Caco-2 (cell line): ENCODE measurements at regions of chr3 and their contacts with region 1.

Region 1: DNA sequence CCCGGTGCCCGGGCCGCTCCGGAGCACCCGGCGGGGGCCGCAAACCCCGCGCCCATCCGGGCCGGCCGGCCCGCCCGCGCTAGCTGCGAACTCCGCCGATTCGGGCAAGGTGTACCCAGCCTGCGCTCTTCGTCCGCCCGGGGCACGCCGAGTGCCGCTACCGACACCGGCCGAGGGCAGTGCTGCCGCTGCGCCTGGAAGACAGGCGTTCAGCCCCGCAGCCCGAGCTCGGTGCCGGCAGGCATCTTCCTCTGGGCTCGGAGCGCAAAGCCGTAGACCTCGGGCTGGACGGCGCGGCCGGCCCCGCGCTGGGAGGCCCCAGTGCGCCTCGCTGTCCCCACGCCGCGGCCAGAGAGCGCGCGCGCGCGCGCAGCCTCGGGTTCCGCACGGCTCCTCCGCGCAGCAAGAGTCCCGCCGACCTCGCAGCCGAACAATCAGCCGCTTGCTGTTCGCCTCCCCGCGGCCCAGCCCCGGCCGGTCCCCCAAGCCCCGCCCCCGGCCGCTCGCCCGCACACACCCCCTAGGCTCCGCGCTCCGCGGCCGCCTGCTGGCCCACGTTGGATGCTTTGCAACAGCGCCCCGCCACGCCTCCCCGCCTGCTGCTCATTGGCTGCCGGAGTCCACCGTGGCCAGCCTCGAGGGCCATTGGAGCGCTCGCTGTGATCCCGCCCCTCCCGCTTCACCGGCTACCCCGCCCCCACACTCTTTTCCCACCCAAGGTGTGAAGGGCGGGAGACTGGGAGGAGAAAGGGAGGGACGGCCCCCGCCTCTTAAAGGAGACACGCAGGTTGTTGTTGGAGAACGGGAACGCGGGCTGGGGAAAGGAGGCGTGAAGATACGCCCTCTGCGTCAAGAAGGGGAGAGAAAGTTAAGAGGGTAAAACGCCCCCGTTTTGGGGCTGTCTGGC is at the start of gene LRIG1:
- DNase-seq: peak; percentile 99
- H3K4me3 ChIP-seq: peak within 1 kb of the TSS; percentile 98
- H3K4me3 Mint-ChIP-seq: peak within 1 kb of the TSS; percentile 91
- H3K27ac Mint-ChIP-seq: peak within 1 kb of the TSS; percentile 79
- H3K4me1 ChIP-seq: peaks cover 41% of the 10 kb centered on the region
- H3K4me1 Mint-ChIP-seq: peaks cover 31% of the 10 kb centered on the region
- H3K27me3 ChIP-seq: no peaks in the 10 kb centered on the region
- H3K27me3 Mint-ChIP-seq: no peaks in the 10 kb centered on the region
- CTCF ChIP-seq: peak in 1 of 2 experiments; percentile 34
- total RNA-seq, gene LRIG1: 43.4 and 47.0 TPM in 2 replicates

Region 2: GRCh38 chr3:66407611-66408218 is 93.1 kb before region 1 on chr3:
- CTCF ChIA-PET with region 1: no interaction called
- POLR2A ChIA-PET with region 1: no interaction called
- intact Hi-C with region 1: loop called (anchors 2 kb)
- DNase-seq: peak; percentile 72 to 84
- H3K4me3 ChIP-seq: no peak overlapping the region
- H3K4me3 Mint-ChIP-seq: no peak overlapping the region
- H3K27ac Mint-ChIP-seq: peak overlapping the region; percentile 53
- H3K4me1 ChIP-seq: peaks cover 4% of the 10 kb centered on the region; the same call in 1 of the 2 replicates
- H3K4me1 Mint-ChIP-seq: peaks cover 14% of the 10 kb centered on the region
- H3K27me3 ChIP-seq: no peaks in the 10 kb centered on the region
- H3K27me3 Mint-ChIP-seq: no peaks in the 10 kb centered on the region
- CTCF ChIP-seq: peak; percentile 76 to 91

Region 3: GRCh38 chr3:66464512-66464894 is 36.3 kb before region 1 on chr3:
- CTCF ChIA-PET with region 1: no interaction called
- POLR2A ChIA-PET with region 1: interaction called, 3 read pairs
- intact Hi-C with region 1: loop called (anchors 1 kb)
- DNase-seq: no peak
- H3K4me3 ChIP-seq: no peak overlapping the region
- H3K4me3 Mint-ChIP-seq: no peak overlapping the region
- H3K27ac Mint-ChIP-seq: peak overlapping the region; percentile 19
- H3K4me1 ChIP-seq: peaks cover 34% of the 10 kb centered on the region
- H3K4me1 Mint-ChIP-seq: peaks cover 23% of the 10 kb centered on the region
- H3K27me3 ChIP-seq: no peaks in the 10 kb centered on the region
- H3K27me3 Mint-ChIP-seq: no peaks in the 10 kb centered on the region
- CTCF ChIP-seq: no peak

Region 4: DNA sequence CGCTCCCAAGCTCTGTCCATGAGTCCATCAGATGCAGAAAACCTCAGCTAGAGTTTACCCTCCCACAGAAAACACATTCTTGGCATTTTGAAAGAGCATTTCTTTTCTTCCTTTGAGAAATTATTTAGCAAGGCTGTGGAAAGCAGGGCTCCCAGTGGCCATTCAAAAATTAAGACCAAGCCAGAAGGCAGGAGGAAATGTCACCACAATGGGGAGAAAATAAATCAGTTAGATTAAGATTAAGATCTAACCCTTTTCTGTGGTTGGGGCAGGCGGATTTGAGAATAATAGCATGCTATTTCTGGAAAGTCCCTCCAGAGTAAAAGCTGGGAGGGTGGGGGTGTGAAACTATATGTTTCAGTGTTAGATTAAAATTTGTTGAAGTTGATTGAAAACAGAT is 20.2 kb before region 1 on chr3:
- CTCF ChIA-PET with region 1: no interaction called
- POLR2A ChIA-PET with region 1: interaction called, 3 read pairs
- intact Hi-C with region 1: loop called (anchors 1 kb)
- DNase-seq: no peak
- H3K4me3 ChIP-seq: no peak overlapping the region
- H3K4me3 Mint-ChIP-seq: peak overlapping the region; percentile 58
- H3K27ac Mint-ChIP-seq: peak overlapping the region; percentile 85
- H3K4me1 ChIP-seq: peaks cover 95% of the 10 kb centered on the region
- H3K4me1 Mint-ChIP-seq: peaks cover 60% of the 10 kb centered on the region
- H3K27me3 ChIP-seq: no peaks in the 10 kb centered on the region
- H3K27me3 Mint-ChIP-seq: no peaks in the 10 kb centered on the region
- CTCF ChIP-seq: no peak

Region 5: DNA sequence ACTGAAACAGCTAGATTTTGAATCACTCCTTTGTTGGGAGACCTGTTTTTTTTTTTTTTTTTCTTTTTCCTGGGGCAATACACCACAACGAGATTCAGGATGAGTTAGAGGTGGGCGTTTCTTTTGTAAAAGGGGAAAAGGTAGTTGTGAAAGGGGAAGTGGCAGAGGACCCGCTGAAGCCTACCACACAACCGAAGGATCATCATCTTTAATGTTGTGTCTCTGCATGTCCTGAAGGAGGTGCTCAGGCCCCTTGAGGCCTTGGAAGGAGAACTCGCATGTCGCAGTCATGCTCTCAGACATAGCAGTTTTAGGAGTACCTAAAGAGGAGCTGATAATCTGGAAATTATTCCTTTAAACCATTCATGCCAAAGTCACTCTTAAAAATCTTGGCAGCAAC is 137.9 kb after region 1 on chr3:
- CTCF ChIA-PET with region 1: no interaction called
- POLR2A ChIA-PET with region 1: no interaction called
- intact Hi-C with region 1: loop called (anchors 2 kb)
- DNase-seq: no peak
- H3K4me3 ChIP-seq: no peak overlapping the region
- H3K4me3 Mint-ChIP-seq: no peak overlapping the region
- H3K27ac Mint-ChIP-seq: no peak overlapping the region
- H3K4me1 ChIP-seq: peaks cover 10% of the 10 kb centered on the region
- H3K4me1 Mint-ChIP-seq: no peaks in the 10 kb centered on the region
- H3K27me3 ChIP-seq: no peaks in the 10 kb centered on the region
- H3K27me3 Mint-ChIP-seq: no peaks in the 10 kb centered on the region
- CTCF ChIP-seq: no peak

Region 6: GRCh38 chr3:66712210-66712609 is 211.4 kb after region 1 on chr3:
- CTCF ChIA-PET with region 1: no interaction called
- POLR2A ChIA-PET with region 1: no interaction called
- intact Hi-C with region 1: loop called (anchors 10 kb)
- DNase-seq: peak in 1 of 2 experiments; percentile 13
- H3K4me3 ChIP-seq: no peak overlapping the region
- H3K4me3 Mint-ChIP-seq: no peak overlapping the region
- H3K27ac Mint-ChIP-seq: no peak overlapping the region
- H3K4me1 ChIP-seq: no peaks in the 10 kb centered on the region
- H3K4me1 Mint-ChIP-seq: no peaks in the 10 kb centered on the region
- H3K27me3 ChIP-seq: no peaks in the 10 kb centered on the region
- H3K27me3 Mint-ChIP-seq: no peaks in the 10 kb centered on the region
- CTCF ChIP-seq: no peak

Region 7: DNA sequence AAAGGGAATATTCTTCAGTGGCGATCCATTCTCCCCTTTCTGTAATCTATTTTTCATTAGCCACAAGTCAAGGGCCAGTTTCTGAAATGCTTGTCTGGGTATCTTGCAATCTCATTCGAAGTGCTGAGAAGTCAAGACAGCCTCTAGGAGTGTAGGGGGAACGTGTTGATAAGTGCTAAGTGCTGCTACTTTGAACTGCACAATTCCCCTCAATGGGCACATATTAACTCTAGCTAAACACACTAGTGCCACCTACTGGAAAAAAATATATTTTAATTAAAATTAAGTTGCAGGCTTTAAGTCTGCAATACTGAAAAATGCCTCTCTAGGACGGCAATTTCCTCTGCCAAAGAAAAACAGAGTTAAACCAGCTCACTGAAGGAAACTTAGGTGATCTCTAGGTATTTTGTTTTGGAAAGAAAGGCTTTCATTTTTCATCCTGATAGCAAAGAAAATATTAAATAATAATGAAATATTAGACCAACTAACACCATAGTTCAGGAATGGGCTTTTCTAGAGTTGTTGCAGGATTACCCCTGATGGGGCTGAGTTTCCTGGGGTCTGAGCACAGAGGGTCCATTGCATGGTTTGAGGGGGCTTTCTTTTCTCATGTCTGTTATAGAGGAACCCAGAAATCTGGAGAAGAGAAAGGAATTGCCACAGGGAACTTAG is 315.4 kb after region 1 on chr3:
- CTCF ChIA-PET with region 1: no interaction called
- POLR2A ChIA-PET with region 1: no interaction called
- intact Hi-C with region 1: loop called (anchors 5 kb)
- DNase-seq: peak in 1 of 2 experiments; percentile 21
- H3K4me3 ChIP-seq: no peak overlapping the region
- H3K4me3 Mint-ChIP-seq: no peak overlapping the region
- H3K27ac Mint-ChIP-seq: no peak overlapping the region
- H3K4me1 ChIP-seq: no peaks in the 10 kb centered on the region
- H3K4me1 Mint-ChIP-seq: peaks cover 6% of the 10 kb centered on the region
- H3K27me3 ChIP-seq: no peaks in the 10 kb centered on the region
- H3K27me3 Mint-ChIP-seq: no peaks in the 10 kb centered on the region
- CTCF ChIP-seq: peak; percentile 32 to 56